ENCODE measurements at regions of chr10 and their contacts with region 1.

Region 1: DNA sequence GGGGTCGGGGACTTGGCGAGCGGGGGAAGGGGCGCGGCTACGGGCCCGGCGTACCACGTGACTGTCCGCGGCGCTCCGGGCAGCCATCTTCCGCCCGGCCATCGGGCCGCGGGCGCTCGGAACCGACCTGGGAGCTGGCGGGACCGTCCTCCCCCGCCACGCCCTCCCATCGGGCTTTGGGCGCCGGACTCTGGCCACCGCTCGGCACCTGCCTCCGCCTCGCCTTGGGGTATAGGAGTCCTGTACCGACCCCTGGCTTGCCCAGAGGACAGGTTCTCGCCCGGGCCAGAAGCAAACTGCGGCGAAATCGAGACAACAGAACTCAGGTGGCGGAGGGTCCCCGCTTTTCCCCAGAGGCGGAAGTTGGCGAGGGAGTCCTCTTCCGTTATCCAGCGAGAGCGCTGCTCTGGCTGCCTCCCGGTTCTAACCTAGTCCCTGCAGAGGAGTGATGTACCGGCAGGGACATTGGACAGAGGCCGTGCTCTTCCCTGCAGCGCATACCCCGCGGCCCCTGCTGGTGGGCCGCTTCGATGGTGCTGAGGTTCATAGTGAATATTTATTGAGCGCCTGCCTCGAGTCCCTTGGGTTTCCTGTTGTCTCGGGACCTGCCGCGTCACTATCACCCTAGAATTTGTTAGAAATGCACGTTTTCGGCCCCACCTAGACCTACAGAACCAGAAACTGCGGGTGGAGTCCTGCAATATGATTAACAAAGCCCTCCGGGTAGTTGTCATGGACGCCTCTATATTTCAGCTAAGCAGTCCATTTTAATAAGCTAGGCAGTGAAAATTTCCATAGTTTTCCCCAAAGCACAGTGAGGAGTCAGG is 1.3 kb upstream of the SGMS1 start:
- DNase-seq: peak in 8 of 9 donors; percentile 48 to 62 (median 58)
- ATAC-seq: peak; percentile 55
- H3K4me3 ChIP-seq: peak overlapping the region; percentile 97
- H3K4me3 Mint-ChIP-seq: peak overlapping the region; percentile 90 to 99 (median 96)
- H3K27ac ChIP-seq: peak overlapping the region; percentile 99
- H3K27ac Mint-ChIP-seq: peak overlapping the region; percentile 94 to 98 (median 95)
- H3K4me1 ChIP-seq: peaks cover 15 to 26% of the 10 kb centered on the region in 2 donors
- H3K4me1 Mint-ChIP-seq: peaks cover 13 to 45% (median 24%) of the 10 kb centered on the region in 7 donors
- H3K27me3 ChIP-seq: no peaks in the 10 kb centered on the region
- H3K27me3 Mint-ChIP-seq: peaks cover 0 to 6% (median 0%) of the 10 kb centered on the region in 5 donors

Region 2: DNA sequence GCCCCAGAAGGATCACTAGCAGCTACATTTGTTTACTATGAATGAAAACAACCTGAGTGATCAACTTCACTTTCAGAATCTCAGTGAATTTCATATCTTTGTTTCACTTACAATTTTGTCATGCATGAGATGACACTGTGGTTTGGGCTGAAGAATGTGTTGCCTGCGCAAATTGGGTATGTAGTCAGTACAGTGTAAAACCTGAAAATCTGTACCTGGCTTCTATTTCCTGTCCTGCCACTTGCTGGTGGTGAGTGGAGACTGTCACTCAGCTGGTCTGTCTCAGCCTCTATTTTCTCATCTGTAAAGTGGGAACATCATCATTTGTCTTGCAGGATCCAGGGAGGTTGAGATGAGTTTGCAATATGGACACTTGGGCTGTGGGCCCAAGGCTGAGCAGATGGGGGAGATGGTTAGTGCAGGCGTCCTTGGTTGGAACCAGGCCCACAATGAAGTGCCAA is 1822.4 kb before region 1 on chr10:
- CTCF ChIA-PET with region 1: no interaction called
- POLR2A ChIA-PET with region 1: no interaction called
- intact Hi-C with region 1: loop called in 1 of 2 experiments (anchors 10 kb)
- DNase-seq: peak in 1 of 9 donors; percentile 17
- ATAC-seq: no peak
- H3K4me3 ChIP-seq: no peak overlapping the region
- H3K4me3 Mint-ChIP-seq: peak overlapping the region in 5 of 10 donors; percentile 4 to 49 (median 21)
- H3K27ac ChIP-seq: no peak overlapping the region
- H3K27ac Mint-ChIP-seq: peak overlapping the region in 7 of 9 donors; percentile 6 to 87 (median 75)
- H3K4me1 ChIP-seq: peaks cover 0 to 66% of the 10 kb centered on the region in 2 donors
- H3K4me1 Mint-ChIP-seq: peaks cover 20 to 82% (median 75%) of the 10 kb centered on the region in 7 donors
- H3K27me3 ChIP-seq: no peaks in the 10 kb centered on the region
- H3K27me3 Mint-ChIP-seq: peaks cover 0 to 6% (median 0%) of the 10 kb centered on the region in 5 donors

Region 3: DNA sequence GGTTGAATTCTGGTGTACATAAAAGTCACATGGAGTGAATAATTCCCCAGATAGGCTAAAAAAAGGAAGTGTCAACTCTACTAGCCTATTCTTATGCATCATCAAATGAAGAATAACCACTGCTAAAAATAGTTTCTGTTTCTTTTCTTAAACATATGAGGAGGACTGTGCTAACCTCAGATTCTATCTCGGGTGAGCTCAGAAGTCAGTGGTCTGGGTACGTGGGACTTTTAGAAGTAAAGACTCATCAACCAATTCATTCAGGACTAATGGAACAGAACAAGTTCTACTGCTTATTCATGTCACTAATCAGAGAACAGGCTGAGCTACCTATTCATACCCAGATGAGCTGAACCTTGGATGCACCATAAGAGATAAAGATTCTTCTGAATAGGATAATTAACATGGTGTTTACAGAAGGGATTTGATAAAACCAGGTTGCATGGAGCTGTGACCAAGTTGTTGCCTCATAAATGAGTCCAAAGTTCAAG is 364.2 kb before region 1 on chr10:
- CTCF ChIA-PET with region 1: no interaction called
- POLR2A ChIA-PET with region 1: no interaction called
- intact Hi-C with region 1: no loop called
- DNase-seq: no peak
- ATAC-seq: peak; percentile 82
- H3K4me3 ChIP-seq: no peak overlapping the region
- H3K4me3 Mint-ChIP-seq: peak overlapping the region in 1 of 10 donors; percentile 35
- H3K27ac ChIP-seq: no peak overlapping the region
- H3K27ac Mint-ChIP-seq: no peak overlapping the region
- H3K4me1 ChIP-seq: peaks cover 0 to 8% of the 10 kb centered on the region in 2 donors
- H3K4me1 Mint-ChIP-seq: peaks cover 0 to 17% (median 0%) of the 10 kb centered on the region in 7 donors
- H3K27me3 ChIP-seq: no peaks in the 10 kb centered on the region
- H3K27me3 Mint-ChIP-seq: peaks cover 38 to 57% (median 48%) of the 10 kb centered on the region in 5 donors

Region 4: DNA sequence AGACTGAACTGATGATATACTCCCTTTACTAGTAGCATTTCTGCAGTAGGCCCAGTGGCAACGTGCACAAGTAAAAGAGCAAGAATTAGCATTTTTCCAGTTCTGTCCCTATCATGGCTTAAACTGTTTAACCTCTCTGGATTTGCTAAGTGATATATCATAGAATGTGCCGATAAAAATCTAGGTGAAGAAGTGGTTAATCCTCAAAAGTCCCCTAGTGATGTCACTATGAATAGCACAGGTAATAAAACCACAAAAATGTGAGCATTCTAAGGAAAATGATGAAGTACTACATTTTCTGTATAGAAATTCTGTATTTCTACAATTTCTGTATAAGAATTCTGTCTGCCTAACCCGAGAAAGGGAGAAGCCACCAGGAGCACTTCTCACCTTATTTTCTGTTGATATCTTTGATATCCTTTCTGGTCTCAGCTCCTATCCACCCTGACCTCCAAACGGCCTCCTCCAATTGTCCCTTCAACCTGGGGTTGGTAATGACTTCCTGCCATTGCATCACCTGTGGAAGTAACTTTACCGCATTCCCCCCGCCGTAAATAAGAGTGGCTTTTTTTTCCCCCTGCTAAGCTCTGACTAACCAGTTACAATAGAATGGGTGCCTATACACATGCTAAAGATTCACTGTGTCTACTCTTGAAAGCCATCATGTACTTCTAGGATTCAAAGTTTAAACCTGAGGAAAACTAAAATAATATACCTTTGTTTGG is 217.8 kb before region 1 on chr10:
- CTCF ChIA-PET with region 1: no interaction called
- POLR2A ChIA-PET with region 1: no interaction called
- intact Hi-C with region 1: no loop called
- DNase-seq: no peak
- ATAC-seq: no peak
- H3K4me3 ChIP-seq: no peak overlapping the region
- H3K4me3 Mint-ChIP-seq: no peak overlapping the region
- H3K27ac ChIP-seq: no peak overlapping the region
- H3K27ac Mint-ChIP-seq: no peak overlapping the region
- H3K4me1 ChIP-seq: no peaks in the 10 kb centered on the region
- H3K4me1 Mint-ChIP-seq: peaks cover 11 to 20% (median 17%) of the 10 kb centered on the region in 7 donors
- H3K27me3 ChIP-seq: no peaks in the 10 kb centered on the region
- H3K27me3 Mint-ChIP-seq: no peaks in the 10 kb centered on the region

Region 5: DNA sequence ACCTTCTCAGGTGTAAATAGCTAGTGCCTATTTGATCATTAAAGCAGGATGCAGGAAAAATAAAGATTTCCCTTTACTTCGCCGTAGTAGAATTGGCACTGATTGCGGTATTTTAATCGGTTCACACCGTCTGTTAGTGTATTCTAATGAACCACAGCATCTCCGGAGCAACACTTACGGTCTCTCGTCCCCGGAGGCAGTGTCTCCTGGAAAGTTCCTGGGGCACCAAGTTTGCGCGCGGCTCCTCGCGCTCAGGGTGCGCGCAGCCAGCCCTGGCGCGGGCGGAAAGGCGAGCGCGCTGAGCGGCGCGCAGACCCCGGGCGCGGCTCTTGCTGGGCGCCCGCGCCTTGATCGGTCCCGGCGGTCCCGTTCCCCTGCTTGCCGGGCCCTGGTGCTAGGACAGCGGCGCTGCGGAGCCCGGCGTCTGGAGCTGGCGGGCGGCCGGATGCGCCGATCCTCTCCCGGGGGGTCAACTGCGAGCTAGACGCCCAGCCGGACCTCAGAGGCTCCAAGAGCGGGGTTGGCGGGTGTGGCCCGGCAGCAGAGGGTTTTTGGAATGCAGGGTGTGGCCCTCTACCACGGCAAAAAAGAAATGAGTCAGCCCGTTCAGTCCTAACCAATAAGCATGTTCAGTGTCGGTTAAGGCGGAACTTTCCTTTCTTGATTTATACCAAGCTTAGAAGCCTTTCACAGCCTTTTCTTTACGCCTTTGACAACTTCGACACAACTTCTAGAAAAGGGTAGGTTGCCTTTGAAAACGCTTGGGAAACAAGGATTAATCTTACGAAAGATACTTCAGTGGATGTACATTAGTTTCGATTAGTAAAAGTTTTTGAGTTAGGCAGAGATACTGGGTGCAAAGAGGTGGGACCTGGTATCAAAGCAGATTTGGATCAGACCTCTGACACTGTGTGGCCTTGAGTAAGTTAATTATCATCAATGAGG is 206.9 kb before region 1 on chr10:
- CTCF ChIA-PET with region 1: no interaction called
- POLR2A ChIA-PET with region 1: interaction called, 6 read pairs
- intact Hi-C with region 1: loop called (anchors 1 to 5 kb)
- DNase-seq: peak in 8 of 9 donors; percentile 4 to 65 (median 16)
- ATAC-seq: peak; percentile 85
- H3K4me3 ChIP-seq: peak overlapping the region; percentile 62
- H3K4me3 Mint-ChIP-seq: peak overlapping the region; percentile 81 to 91 (median 86)
- H3K27ac ChIP-seq: no peak overlapping the region
- H3K27ac Mint-ChIP-seq: peak overlapping the region in 4 of 9 donors; percentile 30 to 93 (median 48)
- H3K4me1 ChIP-seq: peaks cover 4 to 7% of the 10 kb centered on the region in 2 donors
- H3K4me1 Mint-ChIP-seq: peaks cover 26 to 71% (median 48%) of the 10 kb centered on the region in 7 donors
- H3K27me3 ChIP-seq: no peaks in the 10 kb centered on the region
- H3K27me3 Mint-ChIP-seq: no peaks in the 10 kb centered on the region

Region 6: GRCh38 chr10:50540069-50540825 is 84.8 kb before region 1 on chr10:
- CTCF ChIA-PET with region 1: no interaction called
- POLR2A ChIA-PET with region 1: interaction called, 4 read pairs
- intact Hi-C with region 1: loop called in 1 of 2 experiments (anchors 5 kb)
- DNase-seq: no peak
- ATAC-seq: no peak
- H3K4me3 ChIP-seq: no peak overlapping the region
- H3K4me3 Mint-ChIP-seq: peak overlapping the region in 3 of 10 donors; percentile 5 to 32 (median 8)
- H3K27ac ChIP-seq: no peak overlapping the region
- H3K27ac Mint-ChIP-seq: peak overlapping the region in 3 of 9 donors; percentile 8 to 40 (median 28)
- H3K4me1 ChIP-seq: peaks cover 7 to 13% of the 10 kb centered on the region in 2 donors
- H3K4me1 Mint-ChIP-seq: peaks cover 38 to 72% (median 67%) of the 10 kb centered on the region in 7 donors
- H3K27me3 ChIP-seq: no peaks in the 10 kb centered on the region
- H3K27me3 Mint-ChIP-seq: no peaks in the 10 kb centered on the region

Region 7: GRCh38 chr10:50577681-50578350 is 47.3 kb before region 1 on chr10:
- CTCF ChIA-PET with region 1: no interaction called
- POLR2A ChIA-PET with region 1: interaction called, 10 read pairs
- intact Hi-C with region 1: no loop called
- DNase-seq: no peak
- ATAC-seq: peak; percentile 47
- H3K4me3 ChIP-seq: no peak overlapping the region
- H3K4me3 Mint-ChIP-seq: no peak overlapping the region
- H3K27ac ChIP-seq: no peak overlapping the region
- H3K27ac Mint-ChIP-seq: peak overlapping the region in 1 of 9 donors; percentile 9
- H3K4me1 ChIP-seq: peaks cover 2 to 6% of the 10 kb centered on the region in 2 donors
- H3K4me1 Mint-ChIP-seq: peaks cover 0 to 97% (median 90%) of the 10 kb centered on the region in 7 donors
- H3K27me3 ChIP-seq: no peaks in the 10 kb centered on the region
- H3K27me3 Mint-ChIP-seq: no peaks in the 10 kb centered on the region

Region 8: DNA sequence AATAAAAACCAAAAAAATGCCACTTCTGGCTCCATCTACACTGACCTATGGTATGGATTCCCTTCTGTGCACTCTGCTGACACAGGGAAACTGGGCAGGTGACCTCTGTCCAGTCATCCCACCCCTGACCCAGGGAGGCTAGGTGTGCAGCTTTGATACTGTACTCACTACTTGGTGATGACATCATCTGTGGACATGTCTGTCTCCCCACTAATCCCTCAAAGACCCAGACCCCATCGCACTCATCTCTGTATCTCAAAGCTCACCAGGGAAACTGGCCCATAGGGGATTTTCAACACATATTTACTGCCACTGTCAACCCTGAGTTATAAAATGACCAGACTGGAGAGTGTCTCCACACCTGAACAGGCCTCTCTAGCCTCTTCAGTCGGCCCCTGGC is 11.9 kb before region 1 on chr10:
- CTCF ChIA-PET with region 1: interaction called, 3 read pairs
- POLR2A ChIA-PET with region 1: interaction called, 11 read pairs
- intact Hi-C with region 1: no loop called
- DNase-seq: no peak
- ATAC-seq: no peak
- H3K4me3 ChIP-seq: no peak overlapping the region
- H3K4me3 Mint-ChIP-seq: no peak overlapping the region
- H3K27ac ChIP-seq: no peak overlapping the region
- H3K27ac Mint-ChIP-seq: no peak overlapping the region
- H3K4me1 ChIP-seq: peaks cover 3 to 18% of the 10 kb centered on the region in 2 donors
- H3K4me1 Mint-ChIP-seq: peaks cover 14 to 89% (median 73%) of the 10 kb centered on the region in 7 donors
- H3K27me3 ChIP-seq: no peaks in the 10 kb centered on the region
- H3K27me3 Mint-ChIP-seq: no peaks in the 10 kb centered on the region

Region 9: DNA sequence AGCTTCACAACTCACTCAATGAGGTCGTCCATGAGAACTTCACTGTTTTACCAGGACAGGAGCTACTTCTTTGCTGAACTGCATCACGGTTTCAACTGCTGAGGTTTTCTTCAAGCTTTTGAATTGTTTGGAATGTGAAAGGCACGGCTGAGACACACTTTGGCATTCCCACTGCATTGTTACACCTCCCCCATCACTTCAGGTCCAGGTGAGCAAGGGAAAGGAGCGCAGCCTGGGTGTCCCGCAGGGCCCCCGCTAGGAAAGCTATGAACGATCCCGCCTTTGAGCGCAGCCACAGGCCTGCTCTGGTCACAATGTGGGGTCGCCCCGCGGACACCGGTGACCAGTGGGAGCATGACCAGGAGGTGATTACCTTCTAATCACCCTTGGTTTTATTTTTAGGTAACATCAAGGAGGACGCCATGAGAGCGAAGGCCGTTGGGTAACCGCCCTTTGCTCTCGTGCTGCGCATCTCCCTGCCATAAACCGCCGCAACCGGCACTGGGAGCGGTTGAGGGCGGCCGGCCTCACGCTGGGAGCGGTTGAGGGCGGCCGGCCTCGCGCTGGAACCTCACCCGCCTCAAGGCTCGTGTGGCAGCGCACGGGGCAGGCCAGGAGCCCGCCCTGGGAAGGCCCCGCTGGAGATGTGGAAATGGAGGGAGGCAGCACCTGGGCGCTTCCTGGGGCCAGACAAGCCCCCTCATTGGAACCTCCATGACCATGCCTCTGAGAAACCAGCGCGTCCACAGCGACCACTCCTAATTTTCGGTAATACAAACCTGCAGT is 49.6 kb after region 1 on chr10:
- CTCF ChIA-PET with region 1: no interaction called
- POLR2A ChIA-PET with region 1: no interaction called
- intact Hi-C with region 1: no loop called
- DNase-seq: no peak
- ATAC-seq: no peak
- H3K4me3 ChIP-seq: no peak overlapping the region
- H3K4me3 Mint-ChIP-seq: no peak overlapping the region
- H3K27ac ChIP-seq: no peak overlapping the region
- H3K27ac Mint-ChIP-seq: no peak overlapping the region
- H3K4me1 ChIP-seq: peaks cover 9 to 16% of the 10 kb centered on the region in 2 donors
- H3K4me1 Mint-ChIP-seq: peaks cover 4 to 22% (median 15%) of the 10 kb centered on the region in 7 donors
- H3K27me3 ChIP-seq: no peaks in the 10 kb centered on the region
- H3K27me3 Mint-ChIP-seq: no peaks in the 10 kb centered on the region

Region 10: DNA sequence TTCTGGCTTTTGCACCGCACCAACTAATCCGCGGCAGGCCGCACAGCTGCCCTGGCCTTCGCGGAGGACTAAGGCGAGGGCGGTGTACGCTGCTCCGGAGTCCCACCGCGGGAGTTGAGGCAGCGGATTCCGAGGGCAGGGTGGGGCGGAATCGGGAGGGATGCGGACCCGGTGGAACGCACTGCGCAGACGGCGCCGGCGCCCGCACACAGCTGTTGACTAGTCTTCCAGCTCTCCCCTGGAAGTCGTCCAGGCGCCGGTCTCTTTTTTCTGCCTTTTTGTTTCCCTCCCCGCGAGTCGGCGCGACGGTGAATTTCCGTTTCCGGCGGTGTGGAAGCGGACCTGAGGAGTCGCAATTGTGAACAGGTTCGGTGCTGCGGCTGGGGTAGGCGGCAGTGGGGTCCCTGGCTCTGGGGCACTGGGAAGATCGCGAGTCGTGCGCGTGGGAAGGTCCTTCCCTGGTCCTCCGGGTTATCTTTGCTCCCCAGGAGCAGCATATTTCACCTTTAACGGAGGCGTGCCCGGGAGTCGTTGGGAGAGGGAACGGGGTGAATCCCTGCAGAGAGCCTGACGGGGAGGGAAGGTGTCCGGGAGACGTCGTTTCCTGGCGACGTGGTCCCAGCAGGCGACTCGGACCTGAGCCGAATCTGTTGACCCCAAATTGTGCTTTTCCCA is 114.7 kb after region 1 on chr10 and contains the start of gene ASAH2B:
- CTCF ChIA-PET with region 1: no interaction called
- POLR2A ChIA-PET with region 1: interaction called, 6 read pairs
- intact Hi-C with region 1: loop called (anchors 1 to 10 kb)
- DNase-seq: peak; percentile 42 to 79 (median 72)
- ATAC-seq: peak; percentile 77
- H3K4me3 ChIP-seq: peak within 1 kb of the TSS; percentile 92
- H3K4me3 Mint-ChIP-seq: peak within 1 kb of the TSS; percentile 86 to 99 (median 98)
- H3K27ac ChIP-seq: peak within 1 kb of the TSS; percentile 66
- H3K27ac Mint-ChIP-seq: peak within 1 kb of the TSS; percentile 89 to 97 (median 93)
- H3K4me1 ChIP-seq: no peaks in the 10 kb centered on the region
- H3K4me1 Mint-ChIP-seq: peaks cover 18 to 43% (median 39%) of the 10 kb centered on the region in 7 donors
- H3K27me3 ChIP-seq: no peaks in the 10 kb centered on the region
- H3K27me3 Mint-ChIP-seq: peaks cover 0 to 24% (median 0%) of the 10 kb centered on the region in 5 donors
- total RNA-seq, gene ASAH2B: 1.7 to 3.9 (median 2.3) TPM

Measured in naive thymus-derived CD4-positive, alpha-beta T cell (primary cell).